Lower leg skin (tissue), 4 donors: ENCODE measurements at regions of chr15 and their contacts with region 1.

Region 1: GRCh38 chr15:66851226-66852071 is 149.4 kb downstream of the SMAD6 start:
- DNase-seq: peak; percentile 77 to 97
- H3K4me3 ChIP-seq: no peak overlapping the region
- CTCF ChIP-seq: peak in 2 of 3 donors; percentile 66 to 95
- POLR2A ChIP-seq: no peak

Region 2: GRCh38 chr15:66609876-66610275 is 241.6 kb before region 1 on chr15:
- intact Hi-C with region 1: loop called (anchors 5 kb)
- DNase-seq: no peak
- H3K4me3 ChIP-seq: no peak overlapping the region
- CTCF ChIP-seq: no peak
- POLR2A ChIP-seq: no peak

Region 3: DNA sequence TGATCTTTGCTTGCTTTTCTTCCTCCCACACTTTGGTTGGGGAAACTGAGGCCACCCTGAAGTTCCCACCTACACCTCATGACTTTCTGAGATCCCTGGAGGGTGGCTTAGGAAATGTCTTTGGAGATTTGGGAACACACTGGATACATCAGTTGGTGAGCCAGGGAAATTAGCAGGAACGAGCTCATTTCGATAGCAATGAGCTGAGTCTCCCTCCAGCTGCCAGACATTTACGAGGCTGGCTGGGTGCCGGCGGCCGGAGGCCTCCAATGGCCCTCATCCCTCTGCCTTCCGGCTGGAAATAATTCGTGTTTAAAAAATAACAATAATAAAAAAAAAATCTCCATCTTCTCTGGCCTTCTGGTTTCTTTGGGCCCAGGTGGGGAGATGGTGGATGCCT is 110.6 kb before region 1 on chr15:
- intact Hi-C with region 1: no loop called
- DNase-seq: no peak
- H3K4me3 ChIP-seq: no peak overlapping the region
- CTCF ChIP-seq: no peak
- POLR2A ChIP-seq: no peak

Region 4: GRCh38 chr15:66789029-66790025 is 62.1 kb before region 1 on chr15:
- intact Hi-C with region 1: loop called (anchors 10 kb)
- DNase-seq: peak in 1 of 2 donors; percentile 23
- H3K4me3 ChIP-seq: no peak overlapping the region
- CTCF ChIP-seq: no peak
- POLR2A ChIP-seq: no peak